Heart right ventricle (tissue), 16 donors: ENCODE measurements at regions of chr14 and their contacts with region 1.

Region 1: GRCh38 chr14:103043257-103044015 is 13.9 kb downstream of the CDC42BPB start:
- DNase-seq: no peak
- ATAC-seq: no peak
- H3K4me3 ChIP-seq: no peak overlapping the region
- H3K27ac ChIP-seq: no peak overlapping the region
- H3K4me1 ChIP-seq: peaks cover 6 to 38% (median 21%) of the 10 kb centered on the region in 9 donors
- H3K27me3 ChIP-seq: no peaks in the 10 kb centered on the region
- CTCF ChIP-seq: no peak

Region 2: GRCh38 chr14:103091041-103091882 is 47.8 kb after region 1 on chr14:
- intact Hi-C with region 1: loop called in 1 of 10 experiments (anchors 1 kb)
- DNase-seq: peak in 1 of 2 donors; percentile 71
- ATAC-seq: peak; percentile 53 to 73 (median 62)
- H3K4me3 ChIP-seq: peak overlapping the region; percentile 21 to 60 (median 54)
- H3K27ac ChIP-seq: peak overlapping the region in 6 of 10 donors; percentile 9 to 47 (median 31)
- H3K4me1 ChIP-seq: peaks cover 0 to 27% (median 12%) of the 10 kb centered on the region in 9 donors
- H3K27me3 ChIP-seq: peaks cover 0 to 25% (median 11%) of the 10 kb centered on the region in 7 donors
- CTCF ChIP-seq: peak; percentile 25 to 71 (median 59)